BJ (cell line): ENCODE measurements at regions of chr12 and their contacts with region 1.

Region 1: DNA sequence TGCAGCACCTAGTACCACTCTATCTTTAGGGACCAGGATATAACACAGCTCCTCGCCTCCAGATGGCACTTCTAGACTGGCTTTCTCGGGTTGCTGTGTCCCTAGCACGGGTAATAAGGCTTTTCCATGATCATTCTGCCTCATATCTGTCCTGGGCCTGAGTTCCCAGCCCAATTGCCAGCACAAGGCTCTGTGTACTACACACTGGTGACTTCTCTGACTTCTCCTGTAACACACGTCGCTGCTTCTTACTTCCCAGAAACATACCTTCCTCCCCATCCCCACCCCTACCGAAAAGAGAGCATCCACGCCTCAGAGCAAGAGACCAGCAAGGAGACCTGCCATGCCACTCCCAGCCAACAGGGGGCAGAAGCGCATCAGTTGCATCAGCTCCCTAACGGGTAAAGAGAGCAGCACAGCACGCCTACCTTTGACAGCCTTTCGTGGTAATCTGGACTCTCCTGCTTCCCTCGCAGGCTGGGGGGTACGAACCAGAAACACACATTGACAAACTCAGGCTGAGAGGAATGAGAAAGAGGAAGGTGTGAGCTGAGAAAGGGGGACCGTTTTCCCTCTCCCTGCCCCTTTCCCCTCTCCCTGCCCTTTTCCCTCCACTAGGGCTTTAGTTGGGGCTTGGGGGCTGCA is 21.2 kb upstream of the ZNF740 start:
- DNase-seq: no peak
- H3K4me3 ChIP-seq: no peak overlapping the region
- H3K27me3 ChIP-seq: no peaks in the 10 kb centered on the region
- CTCF ChIP-seq: peak; percentile 100

Region 2: DNA sequence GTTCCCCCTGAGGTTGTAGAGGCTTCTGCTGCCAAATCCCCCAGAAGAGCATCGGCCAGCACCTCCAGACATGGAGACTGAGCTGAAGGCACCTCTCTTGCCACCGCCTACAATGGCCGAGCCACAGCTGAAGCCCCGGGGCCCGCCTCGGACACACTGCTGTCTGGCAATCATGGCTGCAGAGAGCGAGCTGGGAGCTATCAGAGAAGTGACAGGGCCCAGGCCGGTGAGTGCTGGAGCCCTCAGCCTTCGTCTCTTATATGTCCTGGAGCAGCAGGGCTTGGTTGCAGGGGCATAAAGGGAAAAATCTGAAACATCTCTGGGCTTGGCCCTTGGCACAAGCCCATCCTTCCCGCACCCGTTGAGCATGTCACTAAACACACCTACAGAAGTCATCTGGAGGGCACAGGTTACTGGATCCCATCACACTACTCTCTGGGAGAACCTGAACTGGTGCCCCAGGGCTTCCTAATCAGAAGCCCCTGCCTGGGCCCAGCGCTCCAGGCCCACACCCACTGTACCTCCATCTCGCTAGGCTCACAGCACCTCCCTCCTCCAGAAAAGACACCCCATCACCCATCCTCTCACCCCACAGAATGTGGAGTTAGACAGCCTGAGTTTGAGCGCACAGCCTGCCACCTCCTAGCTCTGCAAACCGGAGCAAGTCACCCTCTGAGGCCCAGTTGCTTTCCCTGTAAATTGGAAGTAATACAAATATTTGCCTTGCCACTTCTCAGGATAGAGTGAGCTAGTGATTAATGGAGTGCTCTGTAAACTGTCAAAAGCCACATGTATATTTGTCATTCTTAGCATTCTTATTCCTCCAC is 345.2 kb before region 1 on chr12 and contains the start of gene KRT4:
- CTCF ChIA-PET with region 1: no interaction called
- POLR2A ChIA-PET with region 1: no interaction called
- DNase-seq: peak; percentile 25
- H3K4me3 ChIP-seq: no peak within 1 kb of the TSS
- H3K27me3 ChIP-seq: peaks cover 20% of the 10 kb centered on the region
- CTCF ChIP-seq: no peak
- polyA plus RNA-seq, gene KRT4: 0.06 and 0.12 TPM in 2 replicates

Region 3: DNA sequence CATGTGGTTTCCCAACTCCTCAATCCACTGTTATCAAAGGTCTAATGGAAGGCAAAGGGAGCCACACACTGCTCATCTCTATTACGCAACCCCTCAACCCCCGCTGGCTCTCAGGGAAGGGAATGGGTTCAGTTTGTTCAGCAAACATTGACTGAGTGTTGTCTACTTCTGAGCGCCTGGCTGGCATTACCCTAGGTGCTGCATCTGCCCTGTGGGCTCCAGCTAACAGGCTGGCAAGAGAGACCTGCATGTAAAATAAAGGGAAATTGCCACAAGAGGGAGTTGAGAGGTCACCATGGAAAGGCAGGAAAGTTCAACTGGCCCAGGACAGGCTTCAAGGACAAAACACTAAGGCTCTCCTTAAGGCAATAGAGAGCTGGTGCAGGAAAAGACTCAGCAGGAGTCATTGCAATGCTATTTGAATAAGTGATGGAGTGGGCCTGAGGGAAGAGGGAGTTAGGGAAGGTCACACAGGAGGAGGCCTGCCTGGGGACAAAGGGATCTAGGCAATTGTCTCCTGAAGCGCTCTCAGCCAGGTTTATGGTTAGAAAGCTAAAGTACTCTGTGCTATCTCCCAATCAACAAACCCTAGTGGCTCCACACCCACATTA is 15.7 kb after region 1 on chr12:
- CTCF ChIA-PET with region 1: interaction called, 69 read pairs
- POLR2A ChIA-PET with region 1: no interaction called
- DNase-seq: no peak
- H3K4me3 ChIP-seq: no peak overlapping the region
- H3K27me3 ChIP-seq: no peaks in the 10 kb centered on the region
- CTCF ChIP-seq: peak; percentile 42

Region 4: GRCh38 chr12:53190108-53190729 is 30.9 kb after region 1 on chr12:
- CTCF ChIA-PET with region 1: interaction called, 67 read pairs
- POLR2A ChIA-PET with region 1: no interaction called
- DNase-seq: no peak
- H3K4me3 ChIP-seq: no peak overlapping the region
- H3K27me3 ChIP-seq: no peaks in the 10 kb centered on the region
- CTCF ChIP-seq: peak; percentile 93

Region 5: GRCh38 chr12:53200458-53201176 is 41.3 kb after region 1 on chr12:
- CTCF ChIA-PET with region 1: interaction called, 64 read pairs
- POLR2A ChIA-PET with region 1: no interaction called
- DNase-seq: no peak
- H3K4me3 ChIP-seq: no peak overlapping the region
- H3K27me3 ChIP-seq: no peaks in the 10 kb centered on the region
- CTCF ChIP-seq: no peak

Region 6: DNA sequence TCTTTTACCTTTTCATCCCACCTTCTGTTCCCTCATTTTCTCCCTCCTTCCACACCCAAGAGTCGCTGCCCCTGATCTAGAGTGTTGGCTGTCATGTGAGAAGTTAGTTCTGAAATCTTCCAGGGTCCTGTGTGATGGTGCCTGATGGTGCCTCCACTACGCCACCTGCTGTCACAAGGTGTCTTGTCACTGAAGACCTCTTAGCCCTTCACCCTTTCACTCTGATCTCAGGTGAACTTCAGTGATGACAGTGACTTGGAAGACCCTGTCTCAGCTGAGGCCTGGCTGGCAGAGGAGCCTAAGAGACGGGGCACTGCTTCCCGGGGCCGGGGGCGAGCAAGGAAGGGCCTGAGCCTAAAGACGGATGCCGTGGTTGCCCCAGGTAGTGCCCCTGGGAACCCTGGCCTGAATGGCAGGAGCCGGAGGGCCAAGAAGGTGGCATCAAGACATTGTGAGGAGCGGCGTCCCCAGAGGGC is 128.5 kb after region 1 on chr12:
- CTCF ChIA-PET with region 1: interaction called, 36 read pairs
- POLR2A ChIA-PET with region 1: no interaction called
- DNase-seq: no peak
- H3K4me3 ChIP-seq: no peak overlapping the region
- H3K27me3 ChIP-seq: no peaks in the 10 kb centered on the region
- CTCF ChIP-seq: peak; percentile 73

Region 7: GRCh38 chr12:53321074-53321814 is 161.9 kb after region 1 on chr12 and contains the start of gene AAAS:
- CTCF ChIA-PET with region 1: interaction called, 16 read pairs
- POLR2A ChIA-PET with region 1: no interaction called
- DNase-seq: peak; percentile 71
- H3K4me3 ChIP-seq: peak within 1 kb of the TSS; percentile 88
- H3K27me3 ChIP-seq: no peaks in the 10 kb centered on the region
- CTCF ChIP-seq: peak; percentile 100
- polyA plus RNA-seq, gene AAAS: 53.3 and 84.3 TPM in 2 replicates

Region 8: GRCh38 chr12:53344824-53345485 is 185.6 kb after region 1 on chr12:
- CTCF ChIA-PET with region 1: interaction called, 13 read pairs
- POLR2A ChIA-PET with region 1: no interaction called
- DNase-seq: no peak
- H3K4me3 ChIP-seq: peak overlapping the region; percentile 66
- H3K27me3 ChIP-seq: no peaks in the 10 kb centered on the region; the same call in 1 of the 2 replicates
- CTCF ChIP-seq: peak; percentile 93

Region 9: GRCh38 chr12:53995378-53996239 is 836.3 kb after region 1 on chr12:
- CTCF ChIA-PET with region 1: no interaction called
- POLR2A ChIA-PET with region 1: no interaction called
- DNase-seq: no peak
- H3K4me3 ChIP-seq: no peak overlapping the region
- H3K27me3 ChIP-seq: peaks cover 10% of the 10 kb centered on the region
- CTCF ChIP-seq: no peak